Gastrocnemius medialis (tissue), 4 donors: ENCODE measurements at regions of chr1 and their contacts with region 1.

Region 1: GRCh38 chr1:157369808-157370521 is 182.3 kb downstream of the FCRL5 start:
- DNase-seq: no peak
- ATAC-seq: peak in 1 of 2 donors; percentile 70
- H3K4me3 ChIP-seq: no peak overlapping the region
- H3K27ac ChIP-seq: no peak overlapping the region
- H3K4me1 ChIP-seq: no peaks in the 10 kb centered on the region
- H3K27me3 ChIP-seq: no peaks in the 10 kb centered on the region
- CTCF ChIP-seq: peak; percentile 52 to 90 (median 61)
- POLR2A ChIP-seq: no peak

Region 2: GRCh38 chr1:157496121-157496526 is 126.2 kb after region 1 on chr1:
- in situ Hi-C with region 1: loop called in 1 of 4 experiments (anchors 10 kb)
- intact Hi-C with region 1: loop called (anchors 2 kb)
- DNase-seq: no peak
- ATAC-seq: peak in 1 of 2 donors; percentile 41
- H3K4me3 ChIP-seq: no peak overlapping the region
- H3K27ac ChIP-seq: no peak overlapping the region
- H3K4me1 ChIP-seq: no peaks in the 10 kb centered on the region
- H3K27me3 ChIP-seq: no peaks in the 10 kb centered on the region
- CTCF ChIP-seq: peak; percentile 34 to 81 (median 55)
- POLR2A ChIP-seq: no peak